ENCODE measurements at regions of chr6 and their contacts with region 1.

Region 1: DNA sequence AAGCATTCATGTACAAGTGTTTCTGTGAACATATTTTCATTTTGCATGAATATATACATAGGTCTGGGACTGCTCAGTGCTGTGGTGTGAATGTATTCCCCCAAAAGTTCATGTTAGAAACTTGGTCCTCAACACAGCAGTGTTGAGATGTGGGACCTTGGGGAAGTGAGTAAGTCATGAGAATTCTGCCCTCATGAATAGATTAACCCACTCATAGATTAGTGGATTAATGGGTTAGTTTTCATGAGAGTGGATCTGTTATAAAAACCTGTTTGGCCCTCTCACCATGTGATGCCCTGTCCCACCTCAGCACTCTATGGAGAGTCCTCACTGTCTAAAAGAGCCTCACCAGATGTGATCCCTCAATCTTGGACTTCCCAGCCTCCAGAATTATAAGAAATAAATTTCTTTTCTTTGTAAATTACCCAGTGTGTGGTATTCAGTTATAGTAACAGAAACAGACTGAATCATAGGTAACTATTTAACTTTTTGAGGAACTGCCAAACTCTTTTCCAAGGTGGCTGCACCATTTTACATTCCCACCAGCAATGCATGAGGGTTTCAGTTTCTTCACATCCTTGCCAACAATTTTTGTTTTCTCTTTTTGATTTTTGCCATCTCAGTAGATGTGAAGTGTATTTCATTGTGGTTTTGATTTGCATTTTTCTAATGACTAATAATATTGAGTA is 45.3 kb downstream of the QRSL1 start:
- DNase-seq: no peak
- ATAC-seq: no peak
- H3K4me3 Mint-ChIP-seq: no peak overlapping the region
- H3K27ac Mint-ChIP-seq: peak overlapping the region; percentile 15
- H3K4me1 Mint-ChIP-seq: peaks cover 32% of the 10 kb centered on the region
- H3K27me3 Mint-ChIP-seq: no peaks in the 10 kb centered on the region
- CTCF ChIP-seq: no peak

Region 2: DNA sequence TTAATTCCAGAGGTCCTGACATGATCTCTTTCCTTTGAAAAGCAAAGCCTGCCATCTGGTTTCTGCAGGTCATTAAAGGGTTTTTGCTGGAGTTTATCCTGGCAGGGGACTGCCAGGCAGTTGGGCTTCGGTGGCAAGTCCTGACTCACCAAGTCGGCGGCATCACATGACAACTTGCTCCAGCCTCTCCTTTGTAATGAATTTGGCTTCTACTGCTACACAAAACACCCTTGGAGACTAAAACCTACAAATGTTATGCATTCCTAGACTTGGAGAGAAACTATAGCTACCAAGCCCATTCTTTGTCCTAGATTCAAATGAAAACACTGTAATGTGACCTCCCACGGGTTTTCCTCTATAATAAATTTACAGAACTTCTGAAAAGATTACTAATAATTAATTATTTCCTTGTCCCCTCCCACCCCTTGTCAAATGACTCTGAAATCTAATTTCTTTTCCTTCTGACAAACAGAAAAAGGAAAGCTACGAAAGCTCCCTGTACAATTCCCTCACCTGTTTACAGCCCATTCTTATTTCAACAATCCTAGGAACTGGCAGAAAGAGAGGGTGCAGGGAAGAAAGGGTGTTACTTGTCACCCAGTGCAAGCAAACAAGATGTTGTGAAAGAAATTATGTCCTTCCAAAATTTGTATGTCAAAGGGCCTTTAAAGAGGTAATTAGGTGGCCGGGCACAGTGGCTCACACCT is 17.6 kb after region 1 on chr6:
- CTCF ChIA-PET with region 1: no interaction called
- POLR2A ChIA-PET with region 1: interaction called, 9 read pairs
- intact Hi-C with region 1: loop called (anchors 2 kb)
- DNase-seq: no peak
- ATAC-seq: no peak
- H3K4me3 Mint-ChIP-seq: no peak overlapping the region
- H3K27ac Mint-ChIP-seq: no peak overlapping the region
- H3K4me1 Mint-ChIP-seq: peaks cover 56% of the 10 kb centered on the region
- H3K27me3 Mint-ChIP-seq: no peaks in the 10 kb centered on the region
- CTCF ChIP-seq: no peak

Measured in activated B cell treated with CpG ODN at 0.5 μM for 24 hours (primary cell).